Dendritic cell treated with granulocyte-macrophage colony-stimulating factor and Interleukin-4, amounts not matched to agents 40 ng/mL and 50 ng/mL, for 4 days (primary cell): ENCODE measurements at regions of chr12 and their contacts with region 1.

Region 1: DNA sequence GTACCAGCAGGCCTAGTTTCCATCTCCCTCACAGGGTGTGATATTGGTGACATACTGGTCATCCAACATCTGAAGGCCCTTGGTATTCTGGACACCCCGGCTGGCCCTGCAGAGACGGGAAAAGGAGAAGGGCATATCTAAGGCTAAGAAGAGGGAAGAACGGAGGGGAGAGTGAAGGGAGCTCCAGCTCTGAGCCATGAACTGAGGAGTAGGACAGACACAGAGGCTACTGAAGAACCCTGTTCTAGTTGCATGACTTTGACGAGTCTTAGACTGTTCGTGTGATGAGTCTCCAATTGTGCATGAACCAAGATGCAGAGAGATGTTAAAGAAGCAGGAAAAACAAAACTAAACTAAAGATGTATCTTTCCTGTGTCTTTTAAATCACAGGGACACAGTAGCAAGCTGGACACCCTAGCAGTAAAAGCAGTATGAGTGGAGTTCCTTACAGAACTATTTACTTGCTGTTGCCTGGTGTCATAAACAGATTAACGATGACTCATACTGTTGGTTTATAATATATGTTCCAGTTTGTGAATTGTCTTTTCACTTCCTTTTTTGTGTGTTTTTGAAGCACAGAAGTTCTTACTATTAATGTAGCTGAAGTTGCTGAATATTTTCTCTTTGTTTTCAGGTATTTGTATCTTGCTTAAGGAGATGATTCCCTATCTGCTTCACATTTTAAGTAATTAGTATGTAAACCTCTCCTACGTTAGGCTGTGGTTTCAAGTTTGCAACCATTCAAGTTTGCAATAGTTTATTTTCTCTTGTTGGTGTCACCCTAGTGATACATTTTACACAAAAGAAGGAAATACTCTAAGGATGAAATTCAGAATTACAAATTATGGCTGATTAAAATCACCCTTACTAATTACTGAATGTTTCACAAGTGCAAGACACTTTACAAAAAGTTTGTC is 15.7 kb downstream of the FAR2 start:
- H3K4me3 Mint-ChIP-seq: no peak overlapping the region
- H3K27ac Mint-ChIP-seq: peak overlapping the region; percentile 87
- H3K4me1 Mint-ChIP-seq: peaks cover 67% of the 10 kb centered on the region
- H3K27me3 Mint-ChIP-seq: peaks cover 82% of the 10 kb centered on the region

Region 2: GRCh38 chr12:28963554-28963953 is 201.2 kb before region 1 on chr12:
- intact Hi-C with region 1: no loop called
- H3K4me3 Mint-ChIP-seq: no peak overlapping the region
- H3K27ac Mint-ChIP-seq: no peak overlapping the region
- H3K4me1 Mint-ChIP-seq: no peaks in the 10 kb centered on the region
- H3K27me3 Mint-ChIP-seq: no peaks in the 10 kb centered on the region

Region 3: GRCh38 chr12:29024117-29024516 is 140.6 kb before region 1 on chr12:
- intact Hi-C with region 1: no loop called
- H3K4me3 Mint-ChIP-seq: no peak overlapping the region
- H3K27ac Mint-ChIP-seq: no peak overlapping the region
- H3K4me1 Mint-ChIP-seq: no peaks in the 10 kb centered on the region
- H3K27me3 Mint-ChIP-seq: no peaks in the 10 kb centered on the region

Region 4: DNA sequence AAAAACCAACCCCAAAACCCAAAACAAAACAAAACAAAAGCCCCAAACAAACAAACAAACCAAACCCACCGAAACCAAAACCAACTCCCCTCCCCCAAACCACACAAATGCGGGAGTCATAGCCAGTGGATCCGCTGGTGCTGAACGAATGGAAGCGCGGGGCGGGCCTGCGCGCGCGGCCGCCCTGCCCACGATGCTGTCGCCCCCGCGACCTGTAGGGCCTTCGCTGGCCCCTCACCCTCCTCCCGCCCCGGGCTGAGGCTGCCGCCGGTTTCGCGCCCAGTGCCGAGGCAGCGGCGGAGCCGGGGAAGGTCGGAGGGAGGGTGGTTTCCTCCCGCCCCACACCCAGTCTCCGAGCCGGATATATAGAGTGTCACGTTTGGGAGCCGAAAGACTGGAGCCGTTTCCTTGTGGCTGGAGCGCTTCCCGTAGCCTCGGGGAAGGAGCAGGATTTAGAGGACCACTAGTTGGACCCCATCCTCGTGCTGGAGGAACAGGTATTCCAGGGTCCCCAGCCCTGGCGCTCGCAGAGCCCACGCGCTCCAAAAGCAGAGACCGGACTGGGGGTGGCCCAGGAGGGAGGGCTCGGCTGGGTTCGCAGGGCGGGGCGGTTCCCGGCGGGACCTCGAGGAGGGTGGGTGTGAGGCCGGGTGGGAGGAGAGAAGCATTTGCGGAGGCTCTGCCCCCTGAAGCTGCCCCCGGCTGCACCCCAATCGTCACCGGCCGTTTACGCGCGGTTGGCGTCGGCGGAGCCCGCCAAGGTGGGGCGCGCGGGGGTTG is 15.6 kb before region 1 on chr12 and contains the start of gene FAR2:
- intact Hi-C with region 1: loop called (anchors 2 kb)
- H3K4me3 Mint-ChIP-seq: peak within 1 kb of the TSS; percentile 82
- H3K27ac Mint-ChIP-seq: peak within 1 kb of the TSS; percentile 78
- H3K4me1 Mint-ChIP-seq: peaks cover 48% of the 10 kb centered on the region
- H3K27me3 Mint-ChIP-seq: peaks cover 79% of the 10 kb centered on the region

Region 5: GRCh38 chr12:29207120-29207519 is 42.4 kb after region 1 on chr12:
- intact Hi-C with region 1: loop called (anchors 2 kb)
- H3K4me3 Mint-ChIP-seq: peak overlapping the region; percentile 11
- H3K27ac Mint-ChIP-seq: peak overlapping the region; percentile 48
- H3K4me1 Mint-ChIP-seq: peaks cover 51% of the 10 kb centered on the region
- H3K27me3 Mint-ChIP-seq: peaks cover 18% of the 10 kb centered on the region

Region 6: GRCh38 chr12:29241821-29242591 is 77.3 kb after region 1 on chr12:
- intact Hi-C with region 1: loop called (anchors 5 kb)
- H3K4me3 Mint-ChIP-seq: peak overlapping the region; percentile 6
- H3K27ac Mint-ChIP-seq: peak overlapping the region; percentile 86
- H3K4me1 Mint-ChIP-seq: peaks cover 65% of the 10 kb centered on the region
- H3K27me3 Mint-ChIP-seq: peaks cover 21% of the 10 kb centered on the region

Region 7: DNA sequence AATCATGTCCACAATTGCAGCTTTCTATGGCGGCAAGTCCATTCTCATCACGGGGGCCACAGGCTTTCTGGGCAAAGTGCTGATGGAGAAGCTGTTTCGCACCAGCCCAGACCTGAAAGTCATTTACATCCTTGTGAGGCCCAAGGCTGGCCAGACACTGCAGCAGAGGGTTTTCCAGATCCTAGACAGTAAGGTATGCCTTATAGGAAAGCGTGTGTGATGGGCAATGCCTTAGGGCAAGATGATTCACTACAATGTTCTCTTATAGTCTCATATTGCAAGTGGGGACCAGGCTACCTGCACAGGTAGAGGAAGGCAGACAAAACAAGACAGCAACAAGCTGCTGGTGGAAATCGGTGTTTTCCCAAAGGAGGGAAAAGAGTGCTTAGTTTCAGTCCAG is 105.7 kb after region 1 on chr12:
- intact Hi-C with region 1: no loop called
- H3K4me3 Mint-ChIP-seq: no peak overlapping the region
- H3K27ac Mint-ChIP-seq: no peak overlapping the region
- H3K4me1 Mint-ChIP-seq: no peaks in the 10 kb centered on the region
- H3K27me3 Mint-ChIP-seq: peaks cover 31% of the 10 kb centered on the region